ENCODE measurements at regions of chr11 and their contacts with region 1.

Region 1: DNA sequence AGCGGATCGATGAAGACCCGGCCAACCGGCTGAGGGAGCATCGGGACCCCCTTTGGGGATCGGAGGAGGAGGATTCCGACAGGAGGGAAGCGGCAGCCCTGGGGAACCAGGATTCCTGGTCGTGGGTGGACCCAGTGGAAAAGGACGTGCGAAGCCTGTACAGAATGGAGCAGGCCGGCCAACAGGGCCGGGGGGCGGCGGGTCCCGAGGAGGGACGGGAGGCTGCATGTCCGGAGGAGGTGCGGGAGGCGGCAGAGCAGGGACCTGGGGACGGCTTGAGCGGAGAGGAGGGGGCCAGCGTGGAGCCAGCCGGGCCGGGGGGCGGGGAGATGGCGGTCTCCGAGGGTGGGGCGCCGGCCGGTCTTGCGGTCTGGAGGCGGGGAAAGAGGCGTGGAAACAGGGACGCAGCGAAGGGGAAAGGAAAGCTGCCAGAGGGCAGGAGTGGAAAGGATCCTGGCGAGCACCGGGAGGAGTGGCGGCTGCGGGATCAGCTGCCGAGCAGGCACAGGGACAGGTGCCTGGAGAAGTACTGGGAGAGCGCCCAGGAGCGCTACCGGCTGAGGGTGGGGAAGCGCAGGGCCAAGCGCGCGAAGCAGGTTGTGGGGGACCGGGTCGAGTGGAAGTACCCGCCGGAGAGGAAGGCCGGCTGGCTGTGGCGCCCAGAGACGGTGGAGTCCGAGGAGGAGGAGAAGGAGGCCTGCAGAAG is at the start of gene ANO5:
- DNase-seq: peak; percentile 75 to 90 (median 89)
- ATAC-seq: peak; percentile 94 to 96
- H3K4me3 ChIP-seq: peak within 1 kb of the TSS; percentile 74
- H3K27ac ChIP-seq: peak within 1 kb of the TSS; percentile 61
- H3K4me1 ChIP-seq: no peaks in the 10 kb centered on the region
- H3K27me3 ChIP-seq: no peaks in the 10 kb centered on the region
- total RNA-seq, gene ANO5: 50.0 to 119 (median 66.2) TPM

Region 2: GRCh38 chr11:22130462-22131053 is 62.2 kb before region 1 on chr11:
- intact Hi-C with region 1: no loop called
- DNase-seq: no peak
- ATAC-seq: peak in 1 of 2 donors; percentile 31
- H3K4me3 ChIP-seq: no peak overlapping the region
- H3K27ac ChIP-seq: no peak overlapping the region
- H3K4me1 ChIP-seq: no peaks in the 10 kb centered on the region
- H3K27me3 ChIP-seq: no peaks in the 10 kb centered on the region

Region 3: DNA sequence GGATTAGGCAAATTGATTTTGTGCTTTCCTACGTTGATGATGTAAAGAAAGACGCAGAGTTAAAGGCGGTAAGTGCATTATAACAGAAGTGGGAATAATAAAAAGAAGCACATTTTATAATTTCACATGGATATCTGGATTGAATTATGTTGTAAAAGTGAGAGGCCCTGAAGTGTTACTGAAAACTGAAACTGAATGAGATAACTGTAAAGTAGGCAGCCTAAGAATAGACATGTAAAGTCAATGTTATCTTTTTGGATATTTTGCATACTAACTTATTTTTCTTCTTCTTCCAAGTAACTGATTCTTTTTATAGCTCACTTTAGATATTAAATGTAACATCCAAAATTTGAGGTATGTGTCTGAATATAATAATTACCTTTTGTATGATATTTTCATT is 28.3 kb after region 1 on chr11:
- intact Hi-C with region 1: no loop called
- DNase-seq: no peak
- ATAC-seq: peak in 1 of 2 donors; percentile 29
- H3K4me3 ChIP-seq: no peak overlapping the region
- H3K27ac ChIP-seq: no peak overlapping the region
- H3K4me1 ChIP-seq: no peaks in the 10 kb centered on the region
- H3K27me3 ChIP-seq: no peaks in the 10 kb centered on the region

Region 4: DNA sequence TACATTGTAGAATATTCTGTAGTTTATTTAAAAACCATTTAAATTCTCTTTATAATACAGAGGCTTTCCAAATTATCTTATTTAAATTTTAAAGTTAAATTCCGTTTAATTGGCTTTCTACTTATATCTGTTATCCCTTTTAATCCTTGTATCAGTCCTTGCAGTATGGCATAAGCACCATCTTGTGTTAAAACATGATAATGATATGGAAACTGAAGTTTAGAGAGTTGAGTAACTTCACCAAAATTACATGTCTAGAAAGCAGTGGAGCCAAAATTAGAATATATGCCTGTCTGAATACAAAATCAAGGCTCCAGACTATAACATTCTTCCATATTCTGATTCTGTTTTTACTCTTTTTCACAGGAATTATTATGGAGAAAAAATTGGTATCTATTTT is 57.1 kb after region 1 on chr11:
- intact Hi-C with region 1: loop called in 1 of 4 experiments (anchors 10 kb)
- DNase-seq: no peak
- ATAC-seq: no peak
- H3K4me3 ChIP-seq: no peak overlapping the region
- H3K27ac ChIP-seq: no peak overlapping the region
- H3K4me1 ChIP-seq: no peaks in the 10 kb centered on the region
- H3K27me3 ChIP-seq: no peaks in the 10 kb centered on the region

Region 5: GRCh38 chr11:22359295-22359694 is 166.5 kb after region 1 on chr11:
- intact Hi-C with region 1: no loop called
- DNase-seq: no peak
- ATAC-seq: no peak
- H3K4me3 ChIP-seq: no peak overlapping the region
- H3K27ac ChIP-seq: no peak overlapping the region
- H3K4me1 ChIP-seq: no peaks in the 10 kb centered on the region
- H3K27me3 ChIP-seq: no peaks in the 10 kb centered on the region

Measured in right cardiac atrium (tissue), 5 donors.